MCF 10A (cell line): ENCODE measurements at regions of chr17 and their contacts with region 1.

Region 1: GRCh38 chr17:3558603-3559269 is 1.1 kb upstream of the TRPV3 start:
- DNase-seq: peak; percentile 74
- H3K4me3 Mint-ChIP-seq: peak overlapping the region; percentile 7
- H3K27ac Mint-ChIP-seq: peak overlapping the region; percentile 92
- H3K4me1 Mint-ChIP-seq: peaks cover 24% of the 10 kb centered on the region
- H3K27me3 Mint-ChIP-seq: no peaks in the 10 kb centered on the region
- CTCF ChIP-seq: no peak

Region 2: DNA sequence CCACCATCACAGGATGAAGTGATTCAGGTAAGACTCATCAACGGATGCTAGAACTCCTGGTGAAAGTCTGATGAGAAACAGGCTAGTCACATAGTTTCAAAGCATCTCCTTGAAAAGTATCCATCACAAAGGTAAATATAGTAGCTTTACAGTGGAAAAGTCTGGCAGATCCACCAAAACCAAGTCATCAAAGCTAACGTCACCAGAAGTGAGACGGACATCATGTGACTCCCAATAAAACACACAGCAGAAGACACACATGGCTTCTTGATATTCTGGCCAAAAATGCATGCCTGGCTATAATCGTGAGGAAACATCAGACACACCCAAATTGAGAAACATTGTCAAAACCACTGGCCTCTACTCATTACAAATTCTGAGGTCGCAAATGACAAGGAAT is 16.8 kb after region 1 on chr17:
- CTCF ChIA-PET with region 1: no interaction called
- POLR2A ChIA-PET with region 1: interaction called, 10 read pairs
- intact Hi-C with region 1: loop called (anchors 1 kb)
- DNase-seq: peak; percentile 70
- H3K4me3 Mint-ChIP-seq: peak overlapping the region; percentile 10
- H3K27ac Mint-ChIP-seq: peak overlapping the region; percentile 79
- H3K4me1 Mint-ChIP-seq: peaks cover 6% of the 10 kb centered on the region
- H3K27me3 Mint-ChIP-seq: no peaks in the 10 kb centered on the region
- CTCF ChIP-seq: no peak